ENCODE measurements at regions of chr5 and their contacts with region 1.

Region 1: GRCh38 chr5:146533260-146533857 is 17.4 kb upstream of the GPR151 start:
- DNase-seq: peak; percentile 84
- ATAC-seq: peak; percentile 90
- H3K4me3 Mint-ChIP-seq: 0 out of 2 replicates have a peak overlapping the region, but pooled peaks have one; percentile 33
- H3K27ac Mint-ChIP-seq: no peak overlapping the region; the same call in 1 of the 2 replicates
- H3K4me1 Mint-ChIP-seq: peaks cover 15% of the 10 kb centered on the region
- H3K27me3 Mint-ChIP-seq: no peaks in the 10 kb centered on the region; the same call in 1 of the 2 replicates
- CTCF ChIP-seq: peak; percentile 71

Region 2: GRCh38 chr5:146458894-146459293 is 74.5 kb before region 1 on chr5:
- CTCF ChIA-PET with region 1: no interaction called
- POLR2A ChIA-PET with region 1: no interaction called
- DNase-seq: no peak
- ATAC-seq: no peak
- H3K4me3 Mint-ChIP-seq: no peak overlapping the region
- H3K27ac Mint-ChIP-seq: no peak overlapping the region
- H3K4me1 Mint-ChIP-seq: 0 out of 2 replicates have a peak, but pooled peaks cover 3% of the 10 kb centered on the region
- H3K27me3 Mint-ChIP-seq: no peaks in the 10 kb centered on the region
- CTCF ChIP-seq: no peak

Region 3: DNA sequence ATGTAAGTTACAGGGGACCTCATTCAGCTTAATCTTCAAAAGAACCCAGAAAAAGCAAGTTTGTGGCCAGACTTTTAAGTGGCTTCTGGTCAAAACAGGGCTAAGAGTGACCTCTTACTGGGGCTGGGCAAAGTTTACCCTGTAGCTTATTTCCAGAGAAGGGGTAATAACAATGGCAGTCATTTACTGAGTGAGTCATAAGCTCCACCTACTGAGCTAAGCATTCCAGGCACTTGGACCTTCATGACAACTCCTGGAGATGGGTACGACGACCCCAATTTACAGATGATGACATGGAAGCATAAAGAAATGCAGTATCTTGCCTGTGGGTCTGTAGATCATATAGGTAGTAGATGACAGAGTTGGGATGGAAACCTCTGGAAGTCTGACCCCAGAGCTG is 12.6 kb before region 1 on chr5:
- CTCF ChIA-PET with region 1: interaction called, 23 read pairs
- POLR2A ChIA-PET with region 1: no interaction called
- DNase-seq: no peak
- ATAC-seq: peak; percentile 42
- H3K4me3 Mint-ChIP-seq: no peak overlapping the region
- H3K27ac Mint-ChIP-seq: no peak overlapping the region
- H3K4me1 Mint-ChIP-seq: peaks cover 9% of the 10 kb centered on the region
- H3K27me3 Mint-ChIP-seq: no peaks in the 10 kb centered on the region
- CTCF ChIP-seq: no peak

Region 4: GRCh38 chr5:146620669-146621051 is 87.3 kb after region 1 on chr5:
- CTCF ChIA-PET with region 1: interaction called, 12 read pairs
- POLR2A ChIA-PET with region 1: no interaction called
- DNase-seq: no peak
- ATAC-seq: peak; percentile 72
- H3K4me3 Mint-ChIP-seq: no peak overlapping the region
- H3K27ac Mint-ChIP-seq: no peak overlapping the region
- H3K4me1 Mint-ChIP-seq: peaks cover 20% of the 10 kb centered on the region
- H3K27me3 Mint-ChIP-seq: no peaks in the 10 kb centered on the region
- CTCF ChIP-seq: no peak

Measured in WTC11 (cell line).